HCT116 (cell line): ENCODE measurements at regions of chr7 and their contacts with region 1.

Region 1: DNA sequence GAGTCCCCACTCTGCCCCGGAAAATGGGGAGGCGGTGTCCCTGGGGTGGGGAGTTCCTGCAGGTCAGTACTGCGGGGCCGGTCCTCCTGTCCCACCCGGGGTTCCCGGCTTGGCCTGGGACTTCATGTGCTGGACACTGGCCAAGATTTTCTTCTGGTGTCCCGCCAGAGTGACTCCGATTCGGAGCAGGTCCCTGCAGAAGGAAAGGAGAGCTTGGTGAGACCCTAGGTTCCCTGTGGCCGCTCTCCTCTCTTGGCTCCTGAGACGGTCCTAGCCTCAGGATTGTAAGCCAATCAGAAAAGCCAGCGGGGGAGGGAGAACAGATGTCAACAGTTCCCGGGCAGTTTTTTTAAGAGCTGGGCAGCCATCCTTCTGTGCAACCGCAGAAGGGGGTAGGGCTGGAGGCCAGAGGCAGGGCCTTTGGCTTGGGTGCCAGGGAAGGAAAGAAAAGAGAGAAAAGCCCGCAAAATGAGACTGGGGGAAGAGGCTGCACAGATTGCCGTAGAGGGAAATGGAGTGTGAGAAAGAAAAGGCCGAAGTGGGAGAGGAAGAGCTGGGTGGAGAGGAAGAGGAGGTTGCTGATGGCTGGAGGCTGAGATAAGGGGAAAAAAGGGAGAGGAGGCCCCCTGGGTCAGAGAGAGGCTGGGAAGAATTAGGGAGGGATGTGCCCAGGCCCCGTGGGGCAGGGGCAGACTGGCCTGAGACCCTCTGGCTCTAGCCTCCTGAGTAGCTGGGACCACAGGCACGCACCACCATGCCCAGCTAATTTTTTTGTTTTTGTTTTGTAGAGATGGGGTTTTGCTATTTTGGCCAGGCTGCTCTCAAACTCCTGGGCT is 23.7 kb downstream of the EPHB4 start:
- DNase-seq: no peak
- ATAC-seq: no peak
- H3K4me3 ChIP-seq: no peak overlapping the region
- H3K27ac ChIP-seq: peak overlapping the region; percentile 48; the same call in 1 of the 2 replicates
- H3K4me1 ChIP-seq: peaks cover 33 to 48% of the 10 kb centered on the region in 2 experiments
- H3K27me3 ChIP-seq: no peaks in the 10 kb centered on the region
- CTCF ChIP-seq: no peak
- POLR2A ChIP-seq: no peak
- RAD21 ChIP-seq: no peak

Region 2: DNA sequence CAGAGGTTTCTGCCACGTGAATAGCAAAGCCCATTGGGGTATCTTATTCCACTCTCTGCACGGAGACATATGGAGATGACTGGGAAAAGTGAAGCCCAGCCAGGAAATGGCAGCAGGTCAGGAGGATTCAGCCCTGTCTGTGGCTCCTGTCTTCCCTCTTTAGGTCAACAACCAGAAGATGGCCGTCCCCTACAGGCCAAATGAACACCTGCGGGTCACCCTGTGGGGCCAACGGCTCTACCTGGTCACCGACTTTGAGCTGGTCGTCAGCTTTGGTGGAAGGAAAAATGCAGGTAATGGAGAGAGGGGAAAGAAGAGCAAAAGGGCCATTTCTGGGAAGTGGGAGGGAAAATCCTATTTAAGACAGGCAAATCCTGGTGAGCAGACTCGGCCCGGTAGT is 14.6 kb before region 1 on chr7:
- CTCF ChIA-PET with region 1: interaction called, 13 read pairs
- POLR2A ChIA-PET with region 1: no interaction called
- RAD21 ChIA-PET with region 1: no interaction called
- intact Hi-C with region 1: no loop called
- DNase-seq: no peak
- ATAC-seq: peak; percentile 66
- H3K4me3 ChIP-seq: no peak overlapping the region
- H3K27ac ChIP-seq: no peak overlapping the region
- H3K4me1 ChIP-seq: peaks cover 18 to 20% of the 10 kb centered on the region in 2 experiments
- H3K27me3 ChIP-seq: no peaks in the 10 kb centered on the region
- CTCF ChIP-seq: peak; percentile 9 to 53 (median 52); a peak in 4 of 6 replicates
- POLR2A ChIP-seq: no peak
- RAD21 ChIP-seq: peak; percentile 29

Region 3: GRCh38 chr7:100852048-100852872 is 48.6 kb after region 1 on chr7 and contains the start of gene SLC12A9:
- CTCF ChIA-PET with region 1: interaction called, 48 read pairs
- POLR2A ChIA-PET with region 1: no interaction called
- RAD21 ChIA-PET with region 1: interaction called in 1 of 2 experiments, 5 read pairs
- intact Hi-C with region 1: loop called (anchors 1 kb)
- DNase-seq: peak; percentile 81
- ATAC-seq: peak; percentile 97
- H3K4me3 ChIP-seq: peak within 1 kb of the TSS; percentile 83 to 84
- H3K27ac ChIP-seq: peak within 1 kb of the TSS; percentile 63
- H3K4me1 ChIP-seq: peaks cover 6 to 16% of the 10 kb centered on the region in 2 experiments; a peak in 3 of 4 replicates
- H3K27me3 ChIP-seq: no peaks in the 10 kb centered on the region
- CTCF ChIP-seq: peak; percentile 84 to 95 (median 94)
- POLR2A ChIP-seq: peak; percentile 17
- RAD21 ChIP-seq: peak; percentile 99
- total RNA-seq, gene SLC12A9: 24.6 TPM